Left cardiac atrium (tissue), 4 donors: ENCODE measurements at regions of chrX and their contacts with region 1.

Region 1: DNA sequence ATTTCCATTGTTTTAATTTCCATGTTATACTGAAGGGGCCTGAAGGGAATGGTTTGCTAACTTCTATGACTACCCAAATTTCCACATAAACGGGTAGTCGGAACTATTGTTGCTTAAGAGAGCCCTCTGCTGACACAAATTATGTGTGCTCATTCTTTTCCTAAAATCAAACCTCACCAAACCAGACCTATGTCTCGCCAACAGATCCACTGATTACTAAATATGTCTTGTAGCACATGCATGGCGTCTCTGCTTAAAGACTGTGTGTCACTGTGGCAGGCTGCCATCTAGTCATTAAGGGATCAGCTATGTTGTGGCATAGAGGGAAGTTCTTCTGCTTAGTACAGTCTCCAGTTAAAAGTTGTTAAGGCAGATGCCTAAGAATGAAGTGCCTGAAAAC is 25.1 kb downstream of the PIR start:
- DNase-seq: no peak
- ATAC-seq: peak; percentile 73

Region 2: DNA sequence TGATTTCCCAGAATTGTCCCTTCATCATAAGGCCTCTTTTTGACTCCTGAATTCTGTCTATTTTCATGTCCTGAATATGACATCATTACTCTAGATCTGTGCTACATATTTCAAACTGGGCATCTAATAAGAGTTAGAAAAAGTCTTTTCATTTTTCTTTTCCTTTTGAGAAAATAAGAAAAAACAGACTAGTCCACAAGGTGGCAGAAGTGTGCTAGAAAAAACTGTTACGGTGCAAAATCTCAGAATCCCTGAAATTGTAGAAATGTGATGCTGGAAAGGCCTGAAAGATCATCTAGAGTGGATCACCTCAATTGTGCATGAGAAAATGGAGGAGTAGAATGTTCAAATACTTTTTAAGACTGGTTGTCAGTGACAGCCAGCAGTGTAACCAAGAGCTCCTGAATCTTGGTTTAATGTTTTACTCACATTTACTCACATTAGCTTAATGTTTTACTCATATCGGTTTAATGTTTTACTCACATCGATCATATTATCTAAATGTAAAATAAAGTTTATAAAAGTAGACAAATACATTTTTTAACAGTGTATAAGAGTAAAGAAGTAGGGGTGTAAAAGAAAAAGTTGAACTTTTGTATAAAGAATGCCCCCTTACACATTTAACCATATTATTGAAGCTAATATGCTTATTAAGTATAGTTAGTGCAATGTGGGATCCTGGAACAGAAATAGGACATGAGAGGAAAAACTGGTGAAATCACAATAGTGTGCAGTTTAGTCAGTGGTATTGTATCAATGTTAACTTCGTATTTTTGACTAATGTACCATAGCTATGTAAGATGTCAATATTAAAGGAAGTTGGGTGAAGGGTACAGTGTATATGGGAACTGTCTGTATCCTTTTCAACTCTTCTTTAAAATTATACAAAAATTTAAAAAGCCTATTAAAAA is 167.8 kb before region 1 on chrX:
- intact Hi-C with region 1: loop called in 1 of 2 experiments (anchors 5 kb)
- DNase-seq: no peak
- ATAC-seq: no peak

Region 3: GRCh38 chrX:15349046-15349445 is 119.0 kb before region 1 on chrX:
- intact Hi-C with region 1: loop called (anchors 2 to 5 kb)
- DNase-seq: no peak
- ATAC-seq: peak; percentile 81 to 92